Dendritic cell treated with granulocyte-macrophage colony-stimulating factor and Interleukin-4, amounts not matched to agents 40 ng/mL and 50 ng/mL, for 4 days (primary cell): ENCODE measurements at regions of chr3 and their contacts with region 1.

Region 1: DNA sequence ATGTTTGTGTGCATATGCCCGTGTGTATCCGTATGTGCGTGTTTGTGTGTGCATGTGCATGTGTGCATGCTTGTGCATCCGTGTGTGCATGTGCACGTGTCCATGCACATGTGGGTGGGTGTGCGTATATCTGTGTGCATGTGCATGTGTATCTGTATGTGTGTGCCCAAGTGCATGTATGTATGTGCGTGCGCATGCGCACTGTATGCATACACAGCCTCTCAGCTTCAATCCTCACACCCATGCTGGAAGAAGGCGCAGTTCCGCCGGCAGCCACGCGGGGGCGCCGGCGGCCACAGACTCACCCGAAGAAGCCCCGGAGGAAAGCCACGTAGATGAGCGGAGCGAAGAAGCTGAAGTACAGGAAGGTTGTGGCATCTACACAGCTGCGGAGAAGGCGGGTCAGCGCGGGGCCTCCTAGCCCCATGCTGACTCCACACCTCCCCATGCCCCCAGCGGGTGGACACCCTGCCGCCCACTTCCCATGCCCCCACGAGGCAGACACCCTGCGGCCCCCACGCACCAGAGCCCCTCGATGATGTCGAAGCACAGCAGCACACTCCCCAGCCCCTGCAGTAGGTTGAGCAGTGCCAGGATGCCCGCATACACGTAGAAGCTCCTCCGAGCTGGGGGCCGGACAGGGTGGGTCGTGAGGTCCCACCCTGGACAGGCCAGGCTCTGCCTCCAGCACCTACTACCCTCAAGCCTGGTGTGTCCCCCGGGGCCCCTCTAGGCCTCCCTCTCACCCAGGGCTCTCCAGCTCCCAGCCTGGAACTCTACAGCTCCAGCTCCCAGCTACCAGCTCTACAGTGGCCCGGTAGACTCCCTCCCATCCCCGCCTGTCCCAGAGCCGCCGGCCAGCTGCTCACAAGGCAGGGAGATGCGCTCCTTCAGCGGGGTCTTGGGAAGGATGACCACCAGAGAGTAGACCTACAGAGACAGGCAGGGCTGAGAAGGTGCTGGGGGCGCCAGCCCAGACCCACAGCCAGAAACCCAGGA is 15.4 kb downstream of the TPRA1 start:
- H3K4me3 Mint-ChIP-seq: no peak overlapping the region
- H3K27ac Mint-ChIP-seq: peak overlapping the region; percentile 16
- H3K4me1 Mint-ChIP-seq: peaks cover 14% of the 10 kb centered on the region
- H3K27me3 Mint-ChIP-seq: no peaks in the 10 kb centered on the region

Region 2: GRCh38 chr3:127629467-127630403 is 54.6 kb after region 1 on chr3:
- intact Hi-C with region 1: loop called (anchors 10 kb)
- H3K4me3 Mint-ChIP-seq: peak overlapping the region; percentile 77
- H3K27ac Mint-ChIP-seq: no peak overlapping the region
- H3K4me1 Mint-ChIP-seq: peaks cover 19% of the 10 kb centered on the region
- H3K27me3 Mint-ChIP-seq: peaks cover 53% of the 10 kb centered on the region

Region 3: GRCh38 chr3:127750226-127751031 is 175.2 kb after region 1 on chr3:
- intact Hi-C with region 1: no loop called
- H3K4me3 Mint-ChIP-seq: no peak overlapping the region
- H3K27ac Mint-ChIP-seq: peak overlapping the region; percentile 57
- H3K4me1 Mint-ChIP-seq: peaks cover 79% of the 10 kb centered on the region
- H3K27me3 Mint-ChIP-seq: peaks cover 49% of the 10 kb centered on the region

Region 4: GRCh38 chr3:127970966-127971592 is 395.9 kb after region 1 on chr3:
- intact Hi-C with region 1: loop called (anchors 10 kb)
- H3K4me3 Mint-ChIP-seq: no peak overlapping the region
- H3K27ac Mint-ChIP-seq: no peak overlapping the region
- H3K4me1 Mint-ChIP-seq: no peaks in the 10 kb centered on the region
- H3K27me3 Mint-ChIP-seq: peaks cover 23% of the 10 kb centered on the region